Heart right ventricle (tissue), 16 donors: ENCODE measurements at regions of chr14 and their contacts with region 1.

Region 1: DNA sequence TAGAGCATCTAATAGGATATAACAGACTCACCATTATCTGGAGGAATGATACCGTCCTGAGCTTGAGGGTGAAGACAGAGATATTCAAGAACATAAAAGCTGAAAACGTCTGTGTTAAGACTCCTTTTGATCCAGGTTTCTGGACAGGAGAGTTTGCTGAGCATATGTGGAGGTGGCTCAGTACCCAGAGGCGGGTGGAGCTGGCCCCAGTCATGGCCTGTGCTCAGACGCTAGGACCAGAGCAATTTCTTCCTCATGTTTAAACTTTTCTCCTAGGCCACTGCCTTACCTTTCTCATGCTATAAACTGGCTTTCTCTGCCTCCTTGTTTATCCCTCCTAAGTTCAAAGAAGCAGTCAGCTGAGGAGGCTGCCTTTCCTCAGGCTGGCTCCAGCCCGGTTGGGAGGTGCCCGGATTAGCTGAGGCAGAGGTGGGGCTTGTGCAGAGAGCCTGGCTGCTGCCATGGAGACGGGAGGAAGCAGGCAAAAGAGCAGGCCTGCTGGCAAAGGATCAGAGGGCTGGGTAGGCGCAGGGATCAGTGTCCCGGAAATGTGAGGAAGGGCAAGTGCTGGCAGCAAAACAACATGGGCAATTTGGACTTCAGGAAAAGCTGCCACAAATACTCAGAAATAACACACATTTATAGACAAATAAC is 13.7 kb downstream of the COA8 start:
- DNase-seq: peak; percentile 86 to 92
- ATAC-seq: peak; percentile 93 to 98 (median 96)
- H3K4me3 ChIP-seq: peak overlapping the region in 1 of 10 donors; percentile 17
- H3K27ac ChIP-seq: peak overlapping the region in 9 of 10 donors; percentile 38 to 73 (median 60)
- H3K4me1 ChIP-seq: peaks cover 2 to 53% (median 25%) of the 10 kb centered on the region in 9 donors
- H3K27me3 ChIP-seq: no peaks in the 10 kb centered on the region
- CTCF ChIP-seq: no peak

Region 2: GRCh38 chr14:103155013-103155412 is 421.5 kb before region 1 on chr14:
- intact Hi-C with region 1: no loop called
- DNase-seq: peak; percentile 79 to 80
- ATAC-seq: peak; percentile 97 to 100 (median 98)
- H3K4me3 ChIP-seq: no peak overlapping the region
- H3K27ac ChIP-seq: no peak overlapping the region
- H3K4me1 ChIP-seq: peaks cover 0 to 17% (median 7%) of the 10 kb centered on the region in 9 donors
- H3K27me3 ChIP-seq: peaks cover 0 to 8% (median 0%) of the 10 kb centered on the region in 7 donors
- CTCF ChIP-seq: no peak

Region 3: DNA sequence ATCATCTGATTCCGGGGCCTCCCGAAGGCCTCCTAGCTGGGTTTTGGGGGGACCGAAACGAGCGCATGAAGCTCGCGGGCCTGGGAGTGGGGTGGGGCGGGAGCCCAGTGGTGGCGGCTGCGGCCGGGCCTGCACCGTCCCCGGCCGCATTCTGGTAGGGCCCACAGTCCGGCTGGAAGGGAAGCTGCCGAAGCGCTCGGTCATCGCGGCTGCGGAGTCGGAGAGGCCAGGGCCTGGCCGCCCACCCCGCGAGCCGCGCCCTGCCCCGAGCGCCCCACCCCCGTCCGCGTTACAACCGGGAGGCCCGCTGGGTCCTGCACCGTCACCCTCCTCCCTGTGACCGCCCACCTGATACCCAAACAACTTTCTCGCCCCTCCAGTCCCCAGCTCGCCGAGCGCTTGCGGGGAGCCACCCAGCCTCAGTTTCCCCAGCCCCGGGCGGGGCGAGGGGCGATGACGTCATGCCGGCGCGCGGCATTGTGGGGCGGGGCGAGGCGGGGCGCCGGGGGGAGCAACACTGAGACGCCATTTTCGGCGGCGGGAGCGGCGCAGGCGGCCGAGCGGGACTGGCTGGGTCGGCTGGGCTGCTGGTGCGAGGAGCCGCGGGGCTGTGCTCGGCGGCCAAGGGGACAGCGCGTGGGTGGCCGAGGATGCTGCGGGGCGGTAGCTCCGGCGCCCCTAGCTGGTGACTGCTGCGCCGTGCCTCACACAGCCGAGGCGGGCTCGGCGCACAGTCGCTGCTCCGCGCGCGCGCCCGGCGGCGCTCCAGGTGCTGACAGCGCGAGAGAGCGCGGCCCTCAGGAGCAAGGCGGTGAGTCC is 52.4 kb after region 1 on chr14 and contains the start of gene KLC1:
- intact Hi-C with region 1: loop called in 3 of 10 experiments (anchors 5 to 10 kb)
- DNase-seq: peak; percentile 87 to 92
- ATAC-seq: peak; percentile 77 to 93 (median 90)
- H3K4me3 ChIP-seq: peak within 1 kb of the TSS; percentile 69 to 100 (median 98)
- H3K27ac ChIP-seq: peak within 1 kb of the TSS; percentile 87 to 100 (median 99)
- H3K4me1 ChIP-seq: peaks cover 13 to 74% (median 66%) of the 10 kb centered on the region in 9 donors
- H3K27me3 ChIP-seq: no peaks in the 10 kb centered on the region
- CTCF ChIP-seq: peak in 1 of 9 donors; percentile 22
- total RNA-seq, gene KLC1: 123 to 166 (median 146) TPM

Region 4: GRCh38 chr14:103679351-103679750 is 102.9 kb after region 1 on chr14:
- intact Hi-C with region 1: loop called in 4 of 10 experiments (anchors 5 to 10 kb)
- DNase-seq: peak in 1 of 2 donors; percentile 42
- ATAC-seq: peak in 7 of 8 donors; percentile 46 to 82 (median 77)
- H3K4me3 ChIP-seq: no peak overlapping the region
- H3K27ac ChIP-seq: peak overlapping the region in 3 of 10 donors; percentile 14 to 45 (median 31)
- H3K4me1 ChIP-seq: peaks cover 0 to 47% (median 16%) of the 10 kb centered on the region in 9 donors
- H3K27me3 ChIP-seq: no peaks in the 10 kb centered on the region
- CTCF ChIP-seq: peak in 7 of 9 donors; percentile 24 to 60 (median 50)

Region 5: DNA sequence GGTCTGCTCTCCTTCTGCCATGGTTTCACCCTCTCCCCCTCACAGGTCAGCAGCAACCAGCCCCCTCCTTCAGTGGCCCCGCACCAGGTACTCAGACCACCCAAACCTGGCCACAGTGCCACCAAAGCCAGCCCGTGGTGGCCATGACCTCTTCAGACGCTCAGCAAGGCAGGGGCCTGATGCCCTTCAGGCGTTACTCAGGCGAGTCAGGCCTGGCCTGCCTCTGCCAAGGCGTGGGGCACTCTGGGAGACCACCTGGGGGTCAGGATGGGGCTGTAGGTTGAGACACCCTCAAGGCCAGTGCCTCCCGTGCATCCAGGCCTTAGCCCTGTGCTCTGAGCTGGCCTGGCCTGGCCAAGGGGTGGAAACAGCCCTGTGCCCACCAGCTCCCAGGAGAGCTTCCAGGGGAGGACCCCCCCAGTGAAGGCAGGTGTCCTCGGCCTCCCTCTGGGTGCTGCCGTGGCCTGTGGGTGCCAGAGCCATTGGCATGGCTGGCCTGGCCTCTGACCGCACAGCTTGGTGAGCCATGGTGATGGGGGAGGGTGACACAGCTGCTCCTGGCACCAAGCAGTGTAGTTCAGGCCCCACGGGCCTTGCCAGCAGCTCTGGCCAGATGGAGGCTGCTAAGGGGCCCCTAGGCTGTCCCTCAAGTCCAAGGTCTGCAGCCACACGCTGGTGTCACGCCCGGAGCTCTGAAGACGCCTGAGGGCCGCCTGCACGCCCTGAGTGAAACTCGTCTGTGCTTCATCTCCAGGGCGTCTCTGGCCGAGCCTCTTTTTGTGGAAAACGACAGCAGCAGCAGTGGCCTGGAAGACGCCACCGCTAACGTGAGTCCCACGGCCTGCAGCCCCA is 123.6 kb after region 1 on chr14:
- intact Hi-C with region 1: loop called in 1 of 10 experiments (anchors 10 kb)
- DNase-seq: no peak
- ATAC-seq: peak; percentile 9 to 77 (median 48)
- H3K4me3 ChIP-seq: no peak overlapping the region
- H3K27ac ChIP-seq: peak overlapping the region in 9 of 10 donors; percentile 39 to 83 (median 56)
- H3K4me1 ChIP-seq: peaks cover 23 to 100% (median 72%) of the 10 kb centered on the region in 9 donors
- H3K27me3 ChIP-seq: no peaks in the 10 kb centered on the region
- CTCF ChIP-seq: no peak

Region 6: DNA sequence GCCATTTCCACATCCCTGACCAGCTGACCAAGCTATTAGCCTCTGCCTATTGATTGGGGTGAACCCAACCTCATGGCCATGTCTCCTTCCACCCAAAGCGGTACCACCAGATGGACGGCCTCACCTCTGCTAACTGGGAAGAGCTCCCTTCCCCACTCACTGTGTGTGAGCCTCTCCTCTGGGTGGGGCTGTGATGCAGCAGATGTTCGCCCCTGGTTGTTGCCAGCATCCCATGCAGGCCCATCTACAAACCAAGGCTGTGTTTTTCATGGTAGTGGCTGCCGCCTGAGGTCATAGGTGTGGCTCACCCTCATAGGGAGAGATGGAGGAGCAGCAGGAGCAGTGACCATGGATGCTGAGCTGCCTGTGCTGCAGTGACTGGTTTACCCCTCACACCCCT is 413.5 kb after region 1 on chr14:
- intact Hi-C with region 1: loop called in 3 of 10 experiments (anchors 10 kb)
- DNase-seq: no peak
- ATAC-seq: no peak
- H3K4me3 ChIP-seq: no peak overlapping the region
- H3K27ac ChIP-seq: no peak overlapping the region
- H3K4me1 ChIP-seq: no peaks in the 10 kb centered on the region
- H3K27me3 ChIP-seq: peaks cover 0 to 4% (median 0%) of the 10 kb centered on the region in 7 donors
- CTCF ChIP-seq: no peak